Activated B cell treated with CpG ODN at 0.5 μM for 24 hours (primary cell): ENCODE measurements at regions of chr14 and their contacts with region 1.

Region 1: DNA sequence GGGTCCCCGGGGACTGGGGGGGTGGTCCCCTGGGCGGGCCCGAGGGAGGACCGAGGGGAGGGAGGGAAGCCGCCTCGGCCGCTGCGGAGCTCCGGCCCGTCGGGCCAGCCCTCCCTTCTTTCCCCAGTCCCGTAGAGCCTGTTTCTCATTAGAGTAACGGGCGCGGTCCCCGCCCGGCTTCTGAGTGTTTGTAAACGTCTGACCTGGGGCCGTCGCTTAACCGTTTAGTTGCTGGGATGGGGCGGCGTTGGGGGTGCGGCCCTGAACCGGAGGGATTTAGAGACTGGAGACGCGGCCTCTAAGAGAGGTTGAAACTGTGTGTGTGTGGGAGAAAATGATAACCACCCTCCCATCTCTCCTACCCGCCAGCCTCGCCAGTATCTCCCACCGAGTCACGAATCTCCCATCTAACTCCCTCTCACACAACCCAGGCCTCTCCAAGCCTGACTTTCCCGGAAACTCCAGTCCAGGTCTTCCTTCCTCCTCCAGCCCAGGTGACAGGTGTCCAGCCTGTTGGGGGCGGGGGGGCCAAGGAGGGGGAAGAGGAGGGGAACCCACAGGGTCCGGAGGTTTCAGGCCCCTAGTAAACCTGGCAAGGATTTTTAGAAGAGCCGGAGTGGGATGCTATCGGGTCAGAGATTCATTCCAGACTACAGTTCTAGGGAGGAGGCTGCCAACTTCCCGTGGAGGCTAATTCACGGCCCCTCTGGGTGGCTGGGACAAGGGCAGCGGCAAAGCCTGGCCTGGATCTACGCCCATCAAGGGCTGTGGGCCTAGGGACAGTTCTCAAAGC is 1.1 kb upstream of the NFATC4 start:
- DNase-seq: peak; percentile 100
- ATAC-seq: peak; percentile 83
- H3K4me3 Mint-ChIP-seq: peak overlapping the region; percentile 85
- H3K27ac Mint-ChIP-seq: peak overlapping the region; percentile 80
- H3K4me1 Mint-ChIP-seq: peaks cover 33% of the 10 kb centered on the region
- H3K27me3 Mint-ChIP-seq: peaks cover 5% of the 10 kb centered on the region
- CTCF ChIP-seq: no peak

Region 2: DNA sequence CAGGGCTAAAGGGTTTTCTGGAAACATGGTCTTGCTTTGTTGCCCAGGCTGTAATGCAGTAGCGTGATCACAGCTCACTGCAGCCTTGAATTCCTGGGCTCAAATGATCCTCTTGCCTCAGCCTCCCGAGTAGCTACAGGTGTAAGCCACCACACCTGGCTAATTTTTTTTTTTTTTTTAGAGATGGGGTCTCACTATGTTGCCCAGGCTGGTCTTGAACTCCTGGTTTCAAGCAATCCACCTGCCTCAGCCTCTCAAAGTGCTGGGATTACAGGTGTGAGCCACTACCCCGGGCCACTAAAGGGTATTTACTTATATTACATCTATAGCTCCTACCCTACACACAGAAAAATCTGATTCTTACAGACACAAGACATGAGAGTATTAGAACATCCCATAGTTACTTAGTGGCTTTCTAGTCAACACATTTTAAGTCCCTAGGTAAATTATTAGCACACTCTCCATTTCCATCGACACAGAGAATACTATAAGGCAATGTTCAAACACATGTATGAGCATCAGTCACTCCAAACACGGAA is 258.5 kb before region 1 on chr14:
- CTCF ChIA-PET with region 1: no interaction called
- POLR2A ChIA-PET with region 1: no interaction called
- intact Hi-C with region 1: no loop called
- DNase-seq: no peak
- ATAC-seq: no peak
- H3K4me3 Mint-ChIP-seq: no peak overlapping the region
- H3K27ac Mint-ChIP-seq: peak overlapping the region; percentile 90
- H3K4me1 Mint-ChIP-seq: peaks cover 12% of the 10 kb centered on the region
- H3K27me3 Mint-ChIP-seq: no peaks in the 10 kb centered on the region
- CTCF ChIP-seq: no peak

Region 3: DNA sequence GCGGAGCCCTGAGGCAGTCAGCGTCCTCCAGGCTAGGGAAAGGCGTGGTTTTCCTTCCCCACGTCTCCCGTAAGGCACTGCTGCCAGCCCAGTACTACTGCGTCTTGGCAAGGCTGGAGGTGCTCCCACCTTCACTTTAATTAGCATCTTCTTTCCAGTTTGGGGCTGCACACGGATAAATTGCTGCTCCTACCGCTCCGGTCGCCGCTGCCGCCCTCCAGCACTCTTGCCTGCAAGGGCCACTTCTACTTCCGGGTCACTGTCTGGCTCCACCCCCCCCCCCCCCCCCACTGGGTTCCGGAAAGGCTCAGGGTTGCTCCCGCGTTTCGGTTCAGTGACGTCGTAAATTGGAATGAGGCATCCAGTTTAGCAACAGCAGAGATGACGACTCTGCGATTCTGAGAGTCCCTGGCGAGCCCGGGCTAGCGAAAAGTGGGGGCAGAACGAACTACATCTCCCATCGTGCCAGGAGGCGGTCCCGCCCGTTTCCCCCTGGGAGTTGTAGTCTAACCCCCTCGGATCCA is 134.7 kb before region 1 on chr14 and contains the start of gene NEDD8:
- CTCF ChIA-PET with region 1: no interaction called
- POLR2A ChIA-PET with region 1: no interaction called
- intact Hi-C with region 1: no loop called
- DNase-seq: no peak
- ATAC-seq: peak; percentile 88
- H3K4me3 Mint-ChIP-seq: peak within 1 kb of the TSS; percentile 99
- H3K27ac Mint-ChIP-seq: peak within 1 kb of the TSS; percentile 94
- H3K4me1 Mint-ChIP-seq: peaks cover 43% of the 10 kb centered on the region
- H3K27me3 Mint-ChIP-seq: no peaks in the 10 kb centered on the region
- CTCF ChIP-seq: no peak
- total RNA-seq, gene NEDD8: 129 and 149 TPM in 2 replicates

Region 4: GRCh38 chr14:24332268-24332993 is 34.5 kb before region 1 on chr14:
- CTCF ChIA-PET with region 1: interaction called, 26 read pairs
- POLR2A ChIA-PET with region 1: interaction called, 27 read pairs
- intact Hi-C with region 1: loop called (anchors 1 kb)
- DNase-seq: peak; percentile 63
- ATAC-seq: peak; percentile 95
- H3K4me3 Mint-ChIP-seq: peak overlapping the region; percentile 83
- H3K27ac Mint-ChIP-seq: peak overlapping the region; percentile 42
- H3K4me1 Mint-ChIP-seq: peaks cover 39% of the 10 kb centered on the region
- H3K27me3 Mint-ChIP-seq: peaks cover 14% of the 10 kb centered on the region
- CTCF ChIP-seq: no peak

Region 5: GRCh38 chr14:24339284-24340151 is 27.4 kb before region 1 on chr14 and contains the start of gene RIPK3:
- CTCF ChIA-PET with region 1: interaction called, 26 read pairs
- POLR2A ChIA-PET with region 1: interaction called, 27 read pairs
- intact Hi-C with region 1: loop called (anchors 1 kb)
- DNase-seq: peak; percentile 66
- ATAC-seq: peak; percentile 96
- H3K4me3 Mint-ChIP-seq: peak within 1 kb of the TSS; percentile 94
- H3K27ac Mint-ChIP-seq: peak within 1 kb of the TSS; percentile 92
- H3K4me1 Mint-ChIP-seq: peaks cover 32% of the 10 kb centered on the region
- H3K27me3 Mint-ChIP-seq: peaks cover 13% of the 10 kb centered on the region
- CTCF ChIP-seq: no peak
- total RNA-seq, gene RIPK3: 38.9 and 39.2 TPM in 2 replicates

Region 6: GRCh38 chr14:24411443-24412389 is 44.8 kb after region 1 on chr14:
- CTCF ChIA-PET with region 1: interaction called, 26 read pairs
- POLR2A ChIA-PET with region 1: interaction called, 3 read pairs
- intact Hi-C with region 1: loop called (anchors 1 kb)
- DNase-seq: no peak
- ATAC-seq: peak; percentile 81
- H3K4me3 Mint-ChIP-seq: no peak overlapping the region
- H3K27ac Mint-ChIP-seq: no peak overlapping the region
- H3K4me1 Mint-ChIP-seq: no peaks in the 10 kb centered on the region
- H3K27me3 Mint-ChIP-seq: peaks cover 14% of the 10 kb centered on the region
- CTCF ChIP-seq: no peak

Region 7: DNA sequence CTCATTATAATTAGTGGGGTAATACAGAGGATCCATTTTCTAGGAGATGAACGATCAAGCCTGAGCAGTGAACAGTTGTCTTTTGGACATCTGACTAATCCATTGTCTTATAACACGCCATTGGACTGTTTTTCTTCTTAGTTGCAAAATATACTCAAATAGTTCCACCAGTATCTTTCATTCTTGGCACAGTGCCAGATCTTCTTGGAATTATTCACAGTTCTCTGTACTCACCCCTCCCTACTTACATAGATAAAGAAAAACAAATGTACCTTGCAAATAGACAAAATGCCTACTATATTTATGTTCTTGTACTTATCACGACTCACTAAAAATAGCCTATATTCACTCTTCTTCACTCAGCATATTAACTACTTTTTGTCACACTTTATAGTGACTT is 58.8 kb after region 1 on chr14:
- CTCF ChIA-PET with region 1: interaction called, 108 read pairs
- POLR2A ChIA-PET with region 1: interaction called, 257 read pairs
- intact Hi-C with region 1: no loop called
- DNase-seq: no peak
- ATAC-seq: no peak
- H3K4me3 Mint-ChIP-seq: no peak overlapping the region
- H3K27ac Mint-ChIP-seq: no peak overlapping the region
- H3K4me1 Mint-ChIP-seq: peaks cover 10% of the 10 kb centered on the region
- H3K27me3 Mint-ChIP-seq: no peaks in the 10 kb centered on the region
- CTCF ChIP-seq: no peak

Region 8: DNA sequence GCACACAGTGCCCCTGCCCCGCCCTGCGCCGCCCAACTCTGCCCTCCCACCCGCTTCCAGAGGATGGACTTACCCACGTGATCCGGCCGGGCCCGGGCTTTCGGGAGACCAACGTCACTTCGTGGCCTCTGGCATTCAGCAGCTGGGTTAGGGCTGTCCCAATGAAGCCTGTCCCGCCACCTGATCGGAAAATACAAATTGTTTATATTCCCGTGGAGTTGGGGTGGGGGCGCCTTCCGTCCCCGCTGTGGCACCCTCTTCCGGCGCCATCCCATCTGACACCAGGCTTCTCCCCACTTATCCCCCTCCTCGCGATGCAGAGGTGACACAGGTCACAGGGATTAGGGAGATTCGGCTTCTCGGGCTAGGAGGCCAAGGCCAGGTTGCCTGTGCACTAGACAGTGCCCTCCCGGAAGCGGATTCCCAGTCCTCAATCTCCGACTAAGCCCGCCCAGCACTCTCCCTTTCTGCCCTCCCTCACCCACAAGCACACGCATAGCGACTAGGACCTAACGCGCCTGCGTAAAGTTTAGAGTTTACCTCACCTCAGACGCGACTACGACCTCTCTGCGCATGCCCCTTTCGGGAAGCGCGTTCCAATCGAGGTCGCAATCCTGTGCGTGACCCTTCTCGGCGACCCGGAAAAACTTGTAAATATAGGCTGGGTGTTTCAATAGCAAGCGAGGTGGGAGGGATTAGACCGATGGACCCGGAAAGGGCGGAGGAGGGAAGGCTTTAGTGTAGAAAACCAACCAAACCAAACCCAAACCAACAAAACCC is 75.5 kb after region 1 on chr14 and contains the start of gene SDR39U1:
- CTCF ChIA-PET with region 1: interaction called, 44 read pairs
- POLR2A ChIA-PET with region 1: interaction called, 34 read pairs
- intact Hi-C with region 1: loop called (anchors 1 kb)
- DNase-seq: peak; percentile 81
- ATAC-seq: peak; percentile 89
- H3K4me3 Mint-ChIP-seq: peak within 1 kb of the TSS; percentile 98
- H3K27ac Mint-ChIP-seq: peak within 1 kb of the TSS; percentile 98
- H3K4me1 Mint-ChIP-seq: peaks cover 48% of the 10 kb centered on the region
- H3K27me3 Mint-ChIP-seq: no peaks in the 10 kb centered on the region
- CTCF ChIP-seq: no peak
- total RNA-seq, gene SDR39U1: 70.6 and 80.0 TPM in 2 replicates